SK-MEL-5 (cell line): ENCODE measurements at regions of chr12 and their contacts with region 1.

Region 1: GRCh38 chr12:69879041-69879960 is 54.3 kb downstream of the MYRFL start:
- DNase-seq: peak; percentile 80

Region 2: GRCh38 chr12:70590051-70590450 is 710.8 kb after region 1 on chr12:
- in situ Hi-C with region 1: loop called (anchors 25 kb)
- DNase-seq: peak; percentile 83